ENCODE measurements at regions of chr11 and their contacts with region 1.

Region 1: DNA sequence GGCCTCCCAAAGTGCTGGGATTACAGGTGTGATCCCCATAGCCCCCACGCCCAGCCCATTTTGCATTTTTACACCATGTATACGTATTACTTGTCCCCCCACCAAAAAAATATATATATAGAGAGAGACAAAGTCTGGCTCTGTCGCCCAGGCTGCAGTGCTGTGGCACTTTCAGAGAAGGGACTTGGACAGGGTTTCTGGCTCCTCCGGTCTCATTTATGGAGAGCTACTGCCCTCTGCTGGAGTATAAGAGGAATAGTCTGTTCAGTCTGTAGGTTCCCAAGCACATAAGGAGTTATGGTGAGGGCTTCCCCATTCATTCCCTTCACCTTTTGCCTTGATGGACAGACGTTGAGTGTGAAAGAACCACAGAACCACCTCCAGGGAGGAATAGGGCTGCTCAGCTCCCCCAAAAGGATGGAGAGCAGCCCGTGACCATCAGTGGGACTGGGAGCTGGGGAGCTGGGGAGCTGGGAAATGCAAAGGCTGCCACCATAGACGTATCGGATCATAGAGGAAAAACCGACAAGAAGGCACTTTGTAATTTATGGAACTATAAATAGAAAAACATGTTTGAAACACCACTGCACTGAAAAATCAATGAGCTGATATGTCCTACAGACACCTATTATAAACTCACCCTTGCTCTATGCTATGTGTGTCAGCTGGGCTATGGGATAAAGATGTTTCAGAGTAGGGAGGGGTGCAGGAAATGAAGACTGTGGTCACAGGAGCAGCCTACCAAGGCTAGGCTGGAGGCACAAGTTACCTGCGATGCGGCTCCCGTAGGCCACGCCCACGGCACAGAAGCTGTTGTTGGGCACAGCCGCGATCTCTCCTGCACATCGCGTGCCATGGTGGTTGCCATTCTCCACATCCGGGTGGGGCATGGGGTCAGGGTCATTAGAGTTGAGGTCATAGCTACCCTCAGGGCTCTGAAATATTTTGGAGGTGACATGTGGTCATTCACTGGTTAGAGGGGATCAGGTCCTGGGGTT is 5.2 kb downstream of the PCSK7 start:
- DNase-seq: peak in 2 of 5 donors; percentile 50 to 58
- ATAC-seq: peak in 3 of 4 donors; percentile 75 to 80 (median 76)
- H3K4me3 ChIP-seq: no peak overlapping the region
- H3K27ac ChIP-seq: peak overlapping the region in 1 of 12 donors; percentile 13
- H3K4me1 ChIP-seq: peaks cover under 1 to 39% (median 21%) of the 10 kb centered on the region in 12 donors
- H3K27me3 ChIP-seq: no peaks in the 10 kb centered on the region
- CTCF ChIP-seq: peak; percentile 64 to 88 (median 82)
- POLR2A ChIP-seq: no peak

Region 2: DNA sequence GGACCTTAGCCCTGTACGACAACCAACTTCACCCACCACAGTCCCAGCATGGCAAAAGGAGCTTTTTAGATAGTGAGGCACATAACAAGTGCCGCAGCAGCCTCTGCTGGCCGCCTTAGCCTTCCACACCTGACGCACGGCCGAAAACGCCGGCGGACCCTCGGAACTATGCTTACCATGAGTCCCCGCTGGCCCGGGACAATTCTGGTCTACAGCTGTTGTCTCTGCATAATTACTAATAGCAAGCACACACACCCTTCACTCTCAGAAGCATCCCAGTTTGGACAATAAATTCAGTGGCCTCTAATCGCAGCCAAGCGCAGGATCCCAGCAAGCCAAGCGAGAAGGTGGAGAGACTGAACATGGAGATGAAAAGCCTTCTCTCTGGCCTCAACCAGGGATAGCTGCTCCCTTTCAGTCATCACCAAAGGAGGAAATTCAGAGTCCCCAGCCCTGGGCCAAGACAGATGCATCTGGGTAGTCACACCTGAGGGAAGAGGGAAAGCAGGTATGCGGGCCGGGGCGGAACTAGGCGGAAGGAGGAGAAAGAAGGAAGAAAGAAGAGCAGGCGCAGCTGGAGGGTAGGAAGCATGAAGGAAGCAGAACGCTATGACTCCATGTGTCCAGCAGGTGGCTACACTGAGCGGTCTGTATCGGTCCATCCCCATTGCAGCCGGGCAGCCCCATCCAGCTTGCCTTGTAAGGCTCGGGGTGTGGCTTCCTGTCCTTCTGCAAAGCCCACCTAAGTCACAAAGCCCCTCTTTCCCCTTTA is 494.2 kb before region 1 on chr11:
- intact Hi-C with region 1: loop called in 1 of 10 experiments (anchors 5 kb)
- DNase-seq: peak in 4 of 5 donors; percentile 40 to 67 (median 49)
- ATAC-seq: peak; percentile 35 to 83 (median 70)
- H3K4me3 ChIP-seq: no peak overlapping the region
- H3K27ac ChIP-seq: no peak overlapping the region
- H3K4me1 ChIP-seq: peaks cover 0 to 13% (median 0%) of the 10 kb centered on the region in 12 donors
- H3K27me3 ChIP-seq: peaks cover 0 to 7% (median 0%) of the 10 kb centered on the region in 9 donors
- CTCF ChIP-seq: peak; percentile 68 to 90 (median 80)
- POLR2A ChIP-seq: no peak

Region 3: DNA sequence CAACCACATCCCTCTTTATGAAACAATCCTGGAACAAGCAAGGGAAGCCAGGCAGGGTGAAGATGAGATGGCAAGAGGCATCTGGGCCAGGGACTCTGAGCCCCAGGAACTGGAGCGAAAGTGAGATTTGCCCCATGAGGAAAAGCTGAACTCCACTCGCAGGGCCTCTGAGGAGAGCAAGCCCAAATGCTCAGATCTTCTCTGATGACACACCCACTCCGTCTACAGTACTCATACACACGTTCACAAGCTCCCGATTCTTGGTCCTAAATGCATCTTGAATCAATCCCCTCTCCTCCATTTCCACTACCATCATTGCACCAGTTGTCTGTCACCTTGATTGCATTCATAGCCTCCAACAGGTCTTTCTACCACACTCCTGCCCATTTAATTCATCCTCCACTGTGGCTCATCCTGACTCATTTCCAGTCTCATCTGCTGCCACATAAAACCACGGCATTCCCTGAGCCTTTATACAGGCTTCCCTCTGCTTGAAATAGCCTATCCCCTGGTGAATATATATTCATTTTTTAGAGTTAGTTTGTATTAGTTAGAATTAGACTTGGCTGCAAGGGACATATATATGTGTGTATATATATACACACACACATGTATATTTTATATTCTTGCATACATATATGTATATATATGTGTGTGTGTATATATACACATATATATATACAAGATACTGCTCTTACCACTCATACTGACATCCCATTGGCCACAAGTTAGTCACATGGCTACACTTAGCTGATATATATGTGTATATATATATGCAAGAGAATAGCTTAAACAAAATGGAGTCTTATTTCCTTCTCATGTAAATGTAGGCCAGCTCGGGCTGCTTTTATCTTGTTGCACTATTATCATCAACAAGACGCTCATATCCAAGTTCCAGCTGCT is 433.6 kb before region 1 on chr11:
- intact Hi-C with region 1: loop called (anchors 2 to 10 kb)
- DNase-seq: no peak
- ATAC-seq: no peak
- H3K4me3 ChIP-seq: no peak overlapping the region
- H3K27ac ChIP-seq: no peak overlapping the region
- H3K4me1 ChIP-seq: peaks cover 0 to 23% (median 7%) of the 10 kb centered on the region in 12 donors
- H3K27me3 ChIP-seq: no peaks in the 10 kb centered on the region
- CTCF ChIP-seq: no peak
- POLR2A ChIP-seq: no peak

Region 4: DNA sequence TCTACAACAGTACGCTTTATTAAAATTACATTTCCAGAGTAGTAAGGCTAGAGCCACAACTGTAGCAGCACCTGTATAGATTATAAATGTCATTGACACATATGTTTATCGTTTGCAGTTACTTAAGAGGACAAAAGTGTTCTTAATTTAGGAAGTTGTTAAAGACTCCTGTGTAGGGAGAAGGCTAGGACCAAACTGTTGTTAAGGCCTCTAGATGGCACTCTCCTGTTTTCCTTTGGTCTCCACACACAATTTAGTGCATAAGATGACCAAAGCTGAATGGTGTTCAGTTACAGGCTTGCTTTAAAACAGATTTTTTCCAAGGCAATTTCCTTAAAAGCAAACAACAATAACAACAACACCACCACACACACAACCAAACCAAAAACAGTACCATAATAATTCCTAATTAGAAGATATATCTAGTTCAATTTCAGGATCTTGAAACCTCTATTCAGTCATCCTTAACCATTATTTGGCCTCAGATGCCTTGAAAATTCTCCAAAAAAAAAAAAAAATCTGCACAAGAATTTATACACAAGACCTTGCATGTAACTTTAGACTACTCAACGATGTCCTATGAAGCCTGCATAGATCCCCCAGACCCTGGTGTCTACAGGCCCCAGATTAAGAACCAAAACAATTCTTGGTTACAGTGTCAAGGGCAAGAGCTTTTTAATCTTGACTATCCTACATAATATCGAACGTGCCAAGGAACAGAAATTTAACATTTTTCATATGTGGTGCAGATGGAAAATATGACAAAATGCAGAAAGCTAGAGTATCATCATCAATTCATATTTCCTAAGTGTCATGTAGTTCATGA is 346.7 kb before region 1 on chr11:
- intact Hi-C with region 1: loop called in 9 of 10 experiments (anchors 2 to 10 kb)
- DNase-seq: no peak
- ATAC-seq: peak; percentile 67 to 90 (median 85)
- H3K4me3 ChIP-seq: no peak overlapping the region
- H3K27ac ChIP-seq: no peak overlapping the region
- H3K4me1 ChIP-seq: peaks cover 0 to 32% (median 2%) of the 10 kb centered on the region in 12 donors
- H3K27me3 ChIP-seq: no peaks in the 10 kb centered on the region
- CTCF ChIP-seq: peak; percentile 52 to 81 (median 66)
- POLR2A ChIP-seq: no peak

Region 5: DNA sequence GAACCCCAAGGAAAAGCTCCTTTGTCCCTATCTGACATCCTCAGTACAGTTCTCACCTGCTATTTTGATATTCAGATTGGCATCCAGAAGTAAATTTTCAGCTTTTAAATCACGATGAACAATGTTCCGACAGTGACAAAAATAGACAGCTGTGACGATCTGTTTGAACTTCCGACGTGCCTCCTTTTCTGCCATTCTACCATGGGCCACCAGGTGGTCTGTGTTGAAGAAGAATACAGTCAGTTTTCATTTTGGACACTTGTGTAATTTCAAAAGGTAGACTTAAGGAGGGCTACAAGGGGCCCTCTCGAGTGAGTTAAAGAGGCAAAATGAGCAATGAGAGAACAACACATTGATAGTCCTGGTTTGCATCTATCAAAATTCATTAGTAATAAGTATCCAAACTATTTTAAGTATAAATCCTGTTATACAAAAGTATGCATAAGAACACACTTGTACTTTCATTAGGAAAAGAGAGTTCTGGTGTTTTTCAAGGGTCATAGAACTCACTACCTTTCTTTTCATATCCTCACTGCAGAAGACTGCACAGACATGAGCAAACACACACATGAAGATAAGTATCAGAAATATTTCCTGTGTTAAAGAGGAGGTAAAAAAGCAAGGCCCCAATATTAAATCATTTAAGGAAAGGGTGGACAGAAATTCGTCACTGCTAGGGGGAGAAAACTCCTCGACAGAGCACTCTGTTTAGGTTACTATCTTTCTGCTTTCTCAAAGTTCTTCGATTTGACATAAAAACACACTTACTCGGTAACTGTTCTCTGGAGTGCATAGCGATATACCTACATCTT is 299.3 kb before region 1 on chr11:
- intact Hi-C with region 1: no loop called
- DNase-seq: no peak
- ATAC-seq: no peak
- H3K4me3 ChIP-seq: no peak overlapping the region
- H3K27ac ChIP-seq: peak overlapping the region in 1 of 12 donors; percentile 82
- H3K4me1 ChIP-seq: peaks cover 12 to 82% (median 48%) of the 10 kb centered on the region in 12 donors
- H3K27me3 ChIP-seq: no peaks in the 10 kb centered on the region
- CTCF ChIP-seq: peak in 11 of 12 donors; percentile 11 to 43 (median 27)
- POLR2A ChIP-seq: no peak

Region 6: DNA sequence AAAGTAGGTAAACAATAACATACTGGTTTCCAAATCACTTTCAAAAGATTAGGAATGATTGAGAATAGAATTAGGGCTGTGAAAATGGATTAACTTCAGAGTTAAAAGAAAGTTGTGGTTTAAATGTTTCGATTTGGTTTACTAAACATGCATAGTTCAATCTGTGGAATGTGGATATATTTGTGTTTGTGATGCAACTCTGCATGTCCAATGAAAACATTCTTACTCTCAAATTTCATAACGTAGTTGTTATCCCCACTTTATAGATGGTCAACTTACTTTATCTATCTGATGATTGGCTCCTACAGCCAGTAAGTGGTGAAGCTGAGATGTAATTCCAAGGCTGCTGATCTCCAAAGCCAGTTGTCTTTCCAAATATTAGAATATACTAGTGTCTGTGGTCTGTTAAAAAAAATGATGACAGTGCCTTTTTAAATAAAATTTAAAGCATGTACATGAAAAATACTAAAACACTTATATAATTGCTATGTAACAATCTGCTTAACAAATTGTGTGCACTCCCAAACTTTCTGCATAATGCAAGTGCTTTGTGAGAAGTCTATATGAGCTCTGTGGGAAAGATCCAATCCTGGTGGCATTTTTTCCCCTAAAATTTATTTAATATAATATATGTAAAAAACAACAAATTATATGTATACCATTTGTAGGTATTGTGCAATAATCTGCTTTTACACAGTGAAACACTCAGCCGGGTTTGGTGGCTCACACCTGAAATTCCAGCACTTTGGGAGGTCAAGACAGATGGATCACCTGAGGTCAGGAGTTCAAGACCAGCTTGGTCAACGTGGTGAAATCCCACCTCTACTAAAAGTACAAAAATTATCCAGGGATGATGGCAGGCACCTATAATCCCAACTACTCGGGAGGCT is 118.7 kb before region 1 on chr11:
- intact Hi-C with region 1: loop called in 5 of 10 experiments (anchors 2 to 10 kb)
- DNase-seq: no peak
- ATAC-seq: no peak
- H3K4me3 ChIP-seq: no peak overlapping the region
- H3K27ac ChIP-seq: peak overlapping the region in 4 of 12 donors; percentile 35 to 66 (median 55)
- H3K4me1 ChIP-seq: peaks cover 0 to 7% (median 0%) of the 10 kb centered on the region in 12 donors
- H3K27me3 ChIP-seq: no peaks in the 10 kb centered on the region
- CTCF ChIP-seq: no peak
- POLR2A ChIP-seq: no peak

Region 7: DNA sequence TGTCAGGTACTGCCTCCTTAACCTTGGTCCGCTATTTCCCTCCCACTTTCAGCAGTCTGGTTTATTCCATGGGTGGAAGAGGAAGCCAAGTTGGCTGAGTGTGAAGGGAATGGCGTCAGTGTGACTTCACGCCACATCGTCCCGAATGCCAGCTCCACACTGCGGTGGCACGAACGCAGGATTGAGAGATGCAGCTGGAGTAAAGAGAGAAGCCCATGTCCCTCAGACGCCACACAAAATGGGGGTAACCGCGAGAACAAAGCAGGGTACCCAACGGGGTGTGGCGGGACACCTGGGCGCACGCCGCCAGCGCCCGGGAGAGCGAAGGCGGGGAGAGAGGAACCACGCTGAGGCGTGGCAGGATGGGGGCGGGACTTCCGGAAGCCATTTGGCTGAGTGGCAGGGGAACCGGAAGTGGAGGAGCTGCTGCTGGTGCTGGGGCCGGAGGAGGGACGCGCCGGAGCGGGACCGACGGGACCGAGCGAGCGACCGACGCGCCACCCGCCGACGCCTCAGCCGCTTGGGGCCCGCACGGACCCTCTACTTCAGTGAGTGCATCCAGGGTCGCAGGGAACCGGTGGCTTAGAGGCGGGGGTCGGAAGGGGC is 82.7 kb before region 1 on chr11 and contains the start of gene PAFAH1B2:
- intact Hi-C with region 1: loop called in 3 of 10 experiments (anchors 5 kb)
- DNase-seq: peak; percentile 97 to 98 (median 97)
- ATAC-seq: peak; percentile 90 to 98 (median 97)
- H3K4me3 ChIP-seq: peak within 1 kb of the TSS; percentile 62 to 99 (median 84)
- H3K27ac ChIP-seq: peak within 1 kb of the TSS; percentile 86 to 97 (median 94)
- H3K4me1 ChIP-seq: peaks cover 0 to 46% (median 30%) of the 10 kb centered on the region in 12 donors
- H3K27me3 ChIP-seq: no peaks in the 10 kb centered on the region
- CTCF ChIP-seq: no peak
- POLR2A ChIP-seq: peak in 1 of 2 donors; percentile 83
- total RNA-seq, gene PAFAH1B2: 46.8 to 81.1 (median 68.8) TPM

Region 8: DNA sequence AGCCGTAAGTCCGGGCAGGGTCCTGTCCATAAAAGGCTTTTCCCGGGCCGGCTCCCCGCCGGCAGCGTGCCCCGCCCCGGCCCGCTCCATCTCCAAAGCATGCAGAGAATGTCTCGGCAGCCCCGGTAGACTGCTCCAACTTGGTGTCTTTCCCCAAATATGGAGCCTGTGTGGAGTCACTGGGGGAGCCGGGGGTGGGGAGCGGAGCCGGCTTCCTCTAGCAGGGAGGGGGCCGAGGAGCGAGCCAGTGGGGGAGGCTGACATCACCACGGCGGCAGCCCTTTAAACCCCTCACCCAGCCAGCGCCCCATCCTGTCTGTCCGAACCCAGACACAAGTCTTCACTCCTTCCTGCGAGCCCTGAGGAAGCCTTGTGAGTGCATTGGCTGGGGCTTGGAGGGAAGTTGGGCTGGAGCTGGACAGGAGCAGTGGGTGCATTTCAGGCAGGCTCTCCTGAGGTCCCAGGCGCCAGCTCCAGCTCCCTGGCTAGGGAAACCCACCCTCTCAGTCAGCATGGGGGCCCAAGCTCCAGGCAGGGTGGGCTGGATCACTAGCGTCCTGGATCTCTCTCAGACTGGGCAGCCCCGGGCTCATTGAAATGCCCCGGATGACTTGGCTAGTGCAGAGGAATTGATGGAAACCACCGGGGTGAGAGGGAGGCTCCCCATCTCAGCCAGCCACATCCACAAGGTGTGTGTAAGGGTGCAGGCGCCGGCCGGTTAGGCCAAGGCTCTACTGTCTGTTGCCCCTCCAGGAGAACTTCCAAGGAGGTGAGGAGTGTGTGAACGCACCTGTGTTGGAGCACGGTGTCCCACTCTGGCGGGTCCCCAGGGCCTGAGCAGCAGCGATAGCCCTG is 27.4 kb before region 1 on chr11 and contains the start of gene TAGLN:
- intact Hi-C with region 1: loop called in 1 of 10 experiments (anchors 2 kb)
- DNase-seq: peak; percentile 80 to 87 (median 84)
- ATAC-seq: peak; percentile 73 to 83 (median 76)
- H3K4me3 ChIP-seq: peak within 1 kb of the TSS in 11 of 12 donors; percentile 7 to 80 (median 50)
- H3K27ac ChIP-seq: peak within 1 kb of the TSS; percentile 66 to 99 (median 78)
- H3K4me1 ChIP-seq: peaks cover 0 to 54% (median 23%) of the 10 kb centered on the region in 12 donors
- H3K27me3 ChIP-seq: no peaks in the 10 kb centered on the region
- CTCF ChIP-seq: no peak
- POLR2A ChIP-seq: peak in 1 of 2 donors; percentile 55
- total RNA-seq, gene TAGLN: 63.7 to 338 (median 173) TPM